CD8-positive, alpha-beta T cell (primary cell): ENCODE measurements at regions of chr15 and their contacts with region 1.

Region 1: GRCh38 chr15:64046347-64047153 is at the start of gene DAPK2:
- DNase-seq: peak; percentile 34 to 85 (median 67)
- ATAC-seq: peak; percentile 84
- H3K4me3 ChIP-seq: peak within 1 kb of the TSS; percentile 38 to 53
- H3K4me3 Mint-ChIP-seq: peak within 1 kb of the TSS; percentile 78
- H3K27ac ChIP-seq: no peak within 1 kb of the TSS
- H3K27ac Mint-ChIP-seq: peak within 1 kb of the TSS; percentile 49
- H3K4me1 ChIP-seq: peaks cover 6% of the 10 kb centered on the region
- H3K4me1 Mint-ChIP-seq: peaks cover 10% of the 10 kb centered on the region
- H3K27me3 ChIP-seq: peaks cover 0 to 4% of the 10 kb centered on the region in 2 experiments
- H3K27me3 Mint-ChIP-seq: peaks cover 2% of the 10 kb centered on the region
- CTCF ChIP-seq: peak; percentile 67
- total RNA-seq, gene DAPK2: 3.3 to 5.2 TPM

Region 2: DNA sequence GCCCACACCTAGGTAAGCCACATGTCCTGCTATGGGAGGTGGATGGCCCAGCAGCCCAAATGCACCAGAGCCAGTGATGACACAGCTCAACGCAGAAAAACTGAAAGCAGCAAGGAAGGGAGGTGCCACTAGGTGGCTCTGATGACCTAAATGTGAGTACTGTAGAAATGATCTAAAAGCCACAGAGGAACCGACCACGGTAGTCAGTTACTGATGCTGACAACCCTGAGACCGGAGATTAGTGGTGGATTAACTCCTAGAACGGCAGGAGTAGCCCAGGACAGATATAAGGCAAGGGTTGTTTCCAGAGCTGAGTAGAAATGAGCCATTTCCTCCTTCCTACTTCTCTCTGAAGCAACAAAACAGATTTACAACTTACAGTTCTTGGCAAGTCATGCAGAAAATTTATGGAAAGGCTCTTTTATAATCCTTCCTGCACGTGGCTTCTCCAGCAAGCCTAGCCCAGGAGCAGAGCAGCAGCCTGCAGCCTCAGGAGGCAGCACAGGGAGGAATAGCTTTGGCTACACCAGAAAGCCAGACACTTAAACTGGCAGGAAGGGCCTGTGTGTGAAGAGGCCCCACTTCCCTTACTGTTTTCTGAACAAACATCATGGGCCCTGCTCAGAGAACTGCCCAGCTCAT is 436.2 kb before region 1 on chr15:
- CTCF ChIA-PET with region 1: interaction called, 12 read pairs
- POLR2A ChIA-PET with region 1: no interaction called
- intact Hi-C with region 1: no loop called
- DNase-seq: peak; percentile 49 to 87 (median 75)
- ATAC-seq: peak; percentile 89
- H3K4me3 ChIP-seq: no peak overlapping the region
- H3K4me3 Mint-ChIP-seq: no peak overlapping the region
- H3K27ac ChIP-seq: peak overlapping the region; percentile 4 to 68
- H3K27ac Mint-ChIP-seq: peak overlapping the region; percentile 82
- H3K4me1 ChIP-seq: peaks cover 27% of the 10 kb centered on the region
- H3K4me1 Mint-ChIP-seq: peaks cover 36% of the 10 kb centered on the region
- H3K27me3 ChIP-seq: no peaks in the 10 kb centered on the region
- H3K27me3 Mint-ChIP-seq: no peaks in the 10 kb centered on the region
- CTCF ChIP-seq: peak; percentile 77

Region 3: DNA sequence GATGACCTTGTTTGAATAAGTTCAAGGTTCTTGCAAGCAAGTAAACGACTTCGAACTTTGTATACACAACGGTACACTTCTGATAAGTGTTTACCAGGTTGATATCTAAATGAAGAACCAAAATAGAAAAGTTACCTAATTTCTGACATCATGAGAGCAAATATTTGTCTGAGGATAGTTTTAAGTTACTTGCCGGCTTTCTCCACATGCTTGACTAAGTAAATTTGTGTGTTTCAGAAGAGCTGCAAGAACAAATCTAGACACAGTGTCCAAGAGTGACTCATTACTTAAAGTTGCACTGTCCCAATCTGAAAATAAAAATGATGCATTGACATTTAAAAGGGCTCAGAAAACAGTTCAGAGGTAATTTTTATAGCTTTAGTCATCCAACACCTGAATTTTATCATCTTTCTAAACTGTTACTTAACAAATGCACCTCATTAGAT is 327.9 kb before region 1 on chr15:
- CTCF ChIA-PET with region 1: no interaction called
- POLR2A ChIA-PET with region 1: no interaction called
- intact Hi-C with region 1: no loop called
- DNase-seq: no peak
- ATAC-seq: no peak
- H3K4me3 ChIP-seq: no peak overlapping the region
- H3K4me3 Mint-ChIP-seq: no peak overlapping the region
- H3K27ac ChIP-seq: no peak overlapping the region
- H3K27ac Mint-ChIP-seq: no peak overlapping the region
- H3K4me1 ChIP-seq: no peaks in the 10 kb centered on the region
- H3K4me1 Mint-ChIP-seq: peaks cover 10% of the 10 kb centered on the region
- H3K27me3 ChIP-seq: no peaks in the 10 kb centered on the region
- H3K27me3 Mint-ChIP-seq: no peaks in the 10 kb centered on the region
- CTCF ChIP-seq: no peak

Region 4: DNA sequence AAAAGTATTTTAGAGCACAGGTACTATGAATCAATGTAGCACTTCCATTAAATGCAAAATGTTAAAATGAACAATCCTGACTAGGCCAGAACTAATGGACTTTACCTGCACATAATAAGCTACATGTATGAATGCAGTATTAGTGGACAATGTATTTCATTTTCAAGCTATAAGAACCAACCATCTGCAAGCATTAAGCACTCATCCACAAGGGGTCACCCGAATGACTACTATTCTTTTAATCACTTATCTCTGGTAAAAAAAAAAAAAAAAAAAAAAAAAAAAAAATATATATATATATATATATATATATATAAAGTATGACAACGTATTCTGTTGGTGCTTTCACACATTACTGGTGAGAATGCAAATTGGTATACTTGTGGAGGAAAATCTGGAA is 220.0 kb before region 1 on chr15:
- CTCF ChIA-PET with region 1: interaction called, 11 read pairs
- POLR2A ChIA-PET with region 1: no interaction called
- intact Hi-C with region 1: loop called in 1 of 2 experiments (anchors 5 kb)
- DNase-seq: peak in 3 of 9 experiments; percentile 19 to 74 (median 64)
- ATAC-seq: no peak
- H3K4me3 ChIP-seq: no peak overlapping the region
- H3K4me3 Mint-ChIP-seq: peak overlapping the region; percentile 11
- H3K27ac ChIP-seq: no peak overlapping the region
- H3K27ac Mint-ChIP-seq: no peak overlapping the region
- H3K4me1 ChIP-seq: peaks cover 48% of the 10 kb centered on the region
- H3K4me1 Mint-ChIP-seq: peaks cover 79% of the 10 kb centered on the region
- H3K27me3 ChIP-seq: no peaks in the 10 kb centered on the region
- H3K27me3 Mint-ChIP-seq: no peaks in the 10 kb centered on the region
- CTCF ChIP-seq: no peak

Region 5: GRCh38 chr15:63891079-63891767 is 155.3 kb before region 1 on chr15:
- CTCF ChIA-PET with region 1: interaction called, 7 read pairs
- POLR2A ChIA-PET with region 1: interaction called, 4 read pairs
- intact Hi-C with region 1: loop called in 1 of 2 experiments (anchors 1 kb)
- DNase-seq: peak; percentile 48 to 83 (median 75)
- ATAC-seq: no peak
- H3K4me3 ChIP-seq: peak overlapping the region in 1 of 2 experiments; percentile 8
- H3K4me3 Mint-ChIP-seq: peak overlapping the region; percentile 5
- H3K27ac ChIP-seq: peak overlapping the region; percentile 35 to 68
- H3K27ac Mint-ChIP-seq: peak overlapping the region; percentile 90
- H3K4me1 ChIP-seq: peaks cover 65% of the 10 kb centered on the region
- H3K4me1 Mint-ChIP-seq: peaks cover 69% of the 10 kb centered on the region
- H3K27me3 ChIP-seq: no peaks in the 10 kb centered on the region
- H3K27me3 Mint-ChIP-seq: no peaks in the 10 kb centered on the region
- CTCF ChIP-seq: peak; percentile 71

Region 6: GRCh38 chr15:63945007-63945788 is 101.4 kb before region 1 on chr15:
- CTCF ChIA-PET with region 1: interaction called, 35 read pairs
- POLR2A ChIA-PET with region 1: no interaction called
- intact Hi-C with region 1: loop called in 1 of 2 experiments (anchors 1 kb)
- DNase-seq: peak; percentile 36 to 79 (median 68)
- ATAC-seq: peak; percentile 98
- H3K4me3 ChIP-seq: no peak overlapping the region
- H3K4me3 Mint-ChIP-seq: no peak overlapping the region
- H3K27ac ChIP-seq: no peak overlapping the region
- H3K27ac Mint-ChIP-seq: peak overlapping the region; percentile 42
- H3K4me1 ChIP-seq: peaks cover 7% of the 10 kb centered on the region
- H3K4me1 Mint-ChIP-seq: peaks cover 18% of the 10 kb centered on the region
- H3K27me3 ChIP-seq: no peaks in the 10 kb centered on the region
- H3K27me3 Mint-ChIP-seq: no peaks in the 10 kb centered on the region
- CTCF ChIP-seq: peak; percentile 89

Region 7: DNA sequence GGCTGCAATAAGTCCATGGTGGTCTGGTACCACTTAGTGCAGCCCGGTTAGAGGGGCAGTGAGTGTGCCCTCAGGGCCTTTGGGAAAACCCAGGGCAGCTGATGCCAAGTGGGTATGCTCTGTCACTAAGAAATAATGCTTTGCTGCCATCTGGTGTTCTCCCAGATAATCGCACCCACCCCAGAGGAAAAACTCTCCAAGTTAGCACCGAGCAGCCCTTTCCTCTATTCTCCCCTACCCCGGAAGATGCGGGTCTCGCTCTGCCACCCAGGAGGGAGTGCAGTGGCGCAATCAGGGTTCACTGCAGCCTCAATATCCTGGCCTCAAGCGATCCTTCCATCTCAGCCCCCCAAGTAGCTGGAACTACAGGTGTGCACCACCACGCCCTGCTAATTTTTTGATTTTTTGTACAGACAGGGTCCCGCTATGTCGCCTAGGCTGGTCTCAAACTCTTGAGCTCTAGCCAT is 21.0 kb after region 1 on chr15:
- CTCF ChIA-PET with region 1: interaction called, 13 read pairs
- POLR2A ChIA-PET with region 1: no interaction called
- intact Hi-C with region 1: no loop called
- DNase-seq: peak; percentile 49 to 83 (median 71)
- ATAC-seq: peak; percentile 91
- H3K4me3 ChIP-seq: no peak overlapping the region
- H3K4me3 Mint-ChIP-seq: no peak overlapping the region
- H3K27ac ChIP-seq: no peak overlapping the region
- H3K27ac Mint-ChIP-seq: no peak overlapping the region
- H3K4me1 ChIP-seq: no peaks in the 10 kb centered on the region
- H3K4me1 Mint-ChIP-seq: peaks cover 5% of the 10 kb centered on the region
- H3K27me3 ChIP-seq: no peaks in the 10 kb centered on the region
- H3K27me3 Mint-ChIP-seq: no peaks in the 10 kb centered on the region
- CTCF ChIP-seq: peak; percentile 81

Region 8: GRCh38 chr15:64122936-64123351 is 76.4 kb after region 1 on chr15:
- CTCF ChIA-PET with region 1: no interaction called
- POLR2A ChIA-PET with region 1: no interaction called
- intact Hi-C with region 1: no loop called
- DNase-seq: no peak
- ATAC-seq: no peak
- H3K4me3 ChIP-seq: no peak overlapping the region
- H3K4me3 Mint-ChIP-seq: no peak overlapping the region
- H3K27ac ChIP-seq: no peak overlapping the region
- H3K27ac Mint-ChIP-seq: no peak overlapping the region
- H3K4me1 ChIP-seq: no peaks in the 10 kb centered on the region
- H3K4me1 Mint-ChIP-seq: no peaks in the 10 kb centered on the region
- H3K27me3 ChIP-seq: no peaks in the 10 kb centered on the region
- H3K27me3 Mint-ChIP-seq: no peaks in the 10 kb centered on the region
- CTCF ChIP-seq: no peak